ENCODE measurements at regions of chr20 and their contacts with region 1.

Region 1: GRCh38 chr20:53611449-53611894 is 17.8 kb upstream of the ZNF217 start:
- DNase-seq: peak in 1 of 4 experiments; percentile 66
- ATAC-seq: peak; percentile 2; the same call in 2 of the 3 replicates
- H3K4me3 ChIP-seq: peak overlapping the region; percentile 15; the same call in 1 of the 2 replicates
- H3K27ac ChIP-seq: peak overlapping the region; percentile 81
- H3K4me1 ChIP-seq: peaks cover 24 to 49% of the 10 kb centered on the region in 2 experiments
- H3K27me3 ChIP-seq: no peaks in the 10 kb centered on the region
- CTCF ChIP-seq: no peak
- EP300 ChIP-seq: peak; percentile 57
- POLR2A ChIP-seq: no peak
- RAD21 ChIP-seq: no peak

Region 2: GRCh38 chr20:52959125-52959524 is 652.3 kb before region 1 on chr20:
- CTCF ChIA-PET with region 1: no interaction called
- POLR2A ChIA-PET with region 1: no interaction called
- in situ Hi-C with region 1: no loop called
- intact Hi-C with region 1: no loop called
- DNase-seq: peak in 2 of 4 experiments; percentile 28 to 47
- ATAC-seq: peak; percentile 89
- H3K4me3 ChIP-seq: no peak overlapping the region
- H3K27ac ChIP-seq: no peak overlapping the region
- H3K4me1 ChIP-seq: no peaks in the 10 kb centered on the region; a peak in 1 of 5 replicates
- H3K27me3 ChIP-seq: no peaks in the 10 kb centered on the region; a peak in 1 of 5 replicates
- CTCF ChIP-seq: peak; percentile 7 to 33 (median 12); a peak in 1 of 6 replicates
- EP300 ChIP-seq: no peak
- POLR2A ChIP-seq: no peak
- RAD21 ChIP-seq: peak; percentile 9 to 21; a peak in 2 of 4 replicates

Region 3: DNA sequence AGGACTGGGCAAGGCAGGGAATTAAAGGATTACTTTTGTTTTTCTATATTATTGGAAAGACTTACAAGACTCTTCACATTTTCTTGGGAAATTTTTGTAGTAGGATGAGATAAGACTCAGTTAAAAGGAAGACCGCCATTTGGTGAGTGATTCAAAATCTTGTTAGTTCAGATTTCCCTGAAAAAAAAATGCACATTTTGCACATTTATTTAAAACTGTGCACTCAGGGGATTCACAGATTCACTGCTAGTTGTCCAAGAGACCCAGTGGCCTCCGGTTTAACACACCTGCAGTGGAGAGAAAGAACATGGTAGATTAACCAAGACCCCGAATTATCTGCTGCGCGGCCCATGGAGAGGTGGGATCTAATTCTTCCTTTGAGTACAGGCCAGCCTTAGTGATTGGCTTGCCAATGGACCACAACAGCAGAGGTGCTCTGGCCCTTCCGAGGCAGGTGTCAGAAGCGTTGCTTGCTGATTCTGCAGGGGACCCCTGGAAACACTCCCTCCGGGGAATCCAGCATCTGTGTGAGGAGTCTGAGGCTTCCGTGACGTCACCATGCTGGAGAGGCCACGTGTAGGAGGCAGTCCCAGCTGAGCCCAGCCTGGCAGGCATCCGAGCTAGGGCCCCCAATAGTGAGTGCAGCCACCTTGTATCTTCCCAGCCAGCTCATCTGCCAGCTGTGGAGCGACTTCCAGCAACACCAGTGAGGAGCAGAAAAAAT is 86.7 kb before region 1 on chr20:
- CTCF ChIA-PET with region 1: no interaction called
- POLR2A ChIA-PET with region 1: no interaction called
- in situ Hi-C with region 1: no loop called
- intact Hi-C with region 1: no loop called
- DNase-seq: peak in 1 of 4 experiments; percentile 21
- ATAC-seq: peak; percentile 71
- H3K4me3 ChIP-seq: no peak overlapping the region
- H3K27ac ChIP-seq: no peak overlapping the region
- H3K4me1 ChIP-seq: no peaks in the 10 kb centered on the region
- H3K27me3 ChIP-seq: peaks cover 7 to 30% of the 10 kb centered on the region in 2 experiments; a peak in 4 of 5 replicates
- CTCF ChIP-seq: no peak
- EP300 ChIP-seq: no peak
- POLR2A ChIP-seq: no peak
- RAD21 ChIP-seq: no peak

Region 4: DNA sequence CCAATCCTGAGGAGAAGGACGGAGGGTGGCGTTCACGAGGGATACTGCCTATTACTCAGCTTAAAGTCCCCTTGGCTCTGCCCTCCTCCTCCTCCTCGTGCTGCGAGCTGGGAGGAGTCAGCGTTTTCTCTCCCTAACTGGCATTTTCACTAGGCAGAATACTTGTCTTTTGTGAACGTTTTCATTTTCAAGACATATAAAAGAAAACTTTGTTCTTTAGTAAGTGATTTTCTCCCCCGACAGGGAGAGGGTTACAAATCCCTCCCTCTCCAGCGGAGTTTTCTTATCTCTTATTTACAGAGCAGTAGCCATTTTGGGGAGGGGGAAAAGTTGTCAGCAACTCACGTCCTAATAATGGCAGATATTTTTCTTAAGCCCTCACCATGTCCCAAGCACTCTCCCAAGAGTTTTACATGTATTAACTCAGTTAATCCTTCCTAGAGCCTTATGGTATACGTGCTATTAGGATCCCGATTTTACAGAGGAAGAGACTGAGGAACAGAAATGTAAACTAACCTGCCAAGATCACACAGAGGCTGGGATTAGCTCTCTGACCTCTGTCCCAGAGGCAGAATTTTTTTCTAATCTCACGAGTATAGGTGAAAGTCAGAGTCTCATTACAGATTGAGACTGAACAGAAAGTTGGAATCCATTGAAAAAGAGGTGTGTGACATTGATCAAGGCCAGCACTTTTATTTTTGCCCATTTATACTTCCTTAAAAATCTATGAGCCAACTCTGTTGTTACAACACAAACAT is 12.2 kb after region 1 on chr20:
- CTCF ChIA-PET with region 1: no interaction called
- POLR2A ChIA-PET with region 1: interaction called, 60 read pairs
- in situ Hi-C with region 1: no loop called
- intact Hi-C with region 1: loop called (anchors 2 kb)
- DNase-seq: peak; percentile 61 to 86 (median 71)
- ATAC-seq: peak; percentile 90
- H3K4me3 ChIP-seq: peak overlapping the region; percentile 23
- H3K27ac ChIP-seq: peak overlapping the region; percentile 95
- H3K4me1 ChIP-seq: peaks cover 21 to 32% of the 10 kb centered on the region in 2 experiments; a peak in 4 of 5 replicates
- H3K27me3 ChIP-seq: no peaks in the 10 kb centered on the region
- CTCF ChIP-seq: peak in 1 of 3 experiments; percentile 9; a peak in 1 of 6 replicates
- EP300 ChIP-seq: no peak
- POLR2A ChIP-seq: peak; percentile 79
- RAD21 ChIP-seq: peak in 1 of 2 experiments; percentile 31; a peak in 2 of 4 replicates

Region 5: GRCh38 chr20:53652090-53652858 is 40.8 kb after region 1 on chr20:
- CTCF ChIA-PET with region 1: no interaction called
- POLR2A ChIA-PET with region 1: no interaction called
- in situ Hi-C with region 1: no loop called
- intact Hi-C with region 1: loop called (anchors 5 kb)
- DNase-seq: peak in 2 of 4 experiments; percentile 39 to 59
- ATAC-seq: peak; percentile 66
- H3K4me3 ChIP-seq: 0 out of 2 replicates have a peak overlapping the region, but pooled peaks have one; percentile 1
- H3K27ac ChIP-seq: peak overlapping the region; percentile 84
- H3K4me1 ChIP-seq: peaks cover 8 to 36% of the 10 kb centered on the region in 2 experiments; a peak in 4 of 5 replicates
- H3K27me3 ChIP-seq: no peaks in the 10 kb centered on the region
- CTCF ChIP-seq: no peak
- EP300 ChIP-seq: 0 out of 2 replicates have a peak, but pooled peaks have one; percentile 5
- POLR2A ChIP-seq: no peak
- RAD21 ChIP-seq: no peak

Region 6: GRCh38 chr20:53738039-53738944 is 126.8 kb after region 1 on chr20:
- CTCF ChIA-PET with region 1: no interaction called
- POLR2A ChIA-PET with region 1: interaction called, 3 read pairs
- in situ Hi-C with region 1: no loop called
- intact Hi-C with region 1: loop called (anchors 5 kb)
- DNase-seq: peak; percentile 35 to 86 (median 56)
- ATAC-seq: peak; percentile 73
- H3K4me3 ChIP-seq: 0 out of 2 replicates have a peak overlapping the region, but pooled peaks have one; percentile 1
- H3K27ac ChIP-seq: peak overlapping the region; percentile 83
- H3K4me1 ChIP-seq: peaks cover 7 to 40% of the 10 kb centered on the region in 2 experiments
- H3K27me3 ChIP-seq: no peaks in the 10 kb centered on the region
- CTCF ChIP-seq: no peak
- EP300 ChIP-seq: no peak
- POLR2A ChIP-seq: peak; percentile 63
- RAD21 ChIP-seq: peak in 1 of 2 experiments; percentile 15; a peak in 1 of 4 replicates

Region 7: DNA sequence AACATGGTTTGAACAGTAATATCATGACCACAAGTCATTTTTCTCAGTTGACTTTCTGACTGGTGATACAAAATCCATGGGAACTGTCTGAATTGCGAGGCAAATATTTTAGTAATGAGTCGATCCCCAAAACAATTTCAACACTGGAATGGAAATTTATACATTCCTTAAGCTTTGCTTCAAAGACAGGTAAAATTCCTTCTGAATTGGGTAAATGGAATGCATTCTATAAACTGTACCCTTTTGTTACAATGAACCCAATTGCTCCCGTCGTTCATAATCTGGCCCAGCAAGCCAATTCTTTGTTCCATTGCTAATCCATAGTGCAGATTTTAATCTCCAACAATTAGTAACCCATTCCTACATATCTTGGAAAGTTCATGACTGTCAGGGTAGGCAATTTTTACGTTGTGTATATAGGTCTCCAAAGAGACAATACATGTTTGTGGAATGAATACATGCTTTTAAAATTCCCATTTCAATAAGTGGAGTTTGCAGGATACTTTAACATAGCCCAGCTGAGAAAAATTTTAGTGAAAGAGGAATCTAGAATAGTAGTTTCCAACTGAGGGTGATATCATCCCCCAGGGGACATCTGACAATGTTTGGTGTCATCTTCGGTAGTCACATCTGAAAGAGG is 529.6 kb after region 1 on chr20:
- CTCF ChIA-PET with region 1: no interaction called
- POLR2A ChIA-PET with region 1: no interaction called
- in situ Hi-C with region 1: no loop called
- intact Hi-C with region 1: no loop called
- DNase-seq: no peak
- ATAC-seq: no peak
- H3K4me3 ChIP-seq: no peak overlapping the region
- H3K27ac ChIP-seq: no peak overlapping the region
- H3K4me1 ChIP-seq: no peaks in the 10 kb centered on the region
- H3K27me3 ChIP-seq: peaks cover 0 to 16% of the 10 kb centered on the region in 2 experiments; a peak in 3 of 5 replicates
- CTCF ChIP-seq: no peak
- EP300 ChIP-seq: no peak
- POLR2A ChIP-seq: no peak
- RAD21 ChIP-seq: no peak